Transverse colon (tissue), 4 donors: ENCODE measurements at regions of chr11 and their contacts with region 1.

Region 1: GRCh38 chr11:117107701-117108590 is 9.7 kb upstream of the SIK3 start:
- DNase-seq: no peak
- H3K4me3 ChIP-seq: no peak overlapping the region
- H3K27ac ChIP-seq: no peak overlapping the region
- H3K4me1 ChIP-seq: peaks cover 0 to 4% (median 1%) of the 10 kb centered on the region in 4 donors
- H3K27me3 ChIP-seq: no peaks in the 10 kb centered on the region
- CTCF ChIP-seq: no peak
- EP300 ChIP-seq: no peak
- POLR2A ChIP-seq: no peak

Region 2: GRCh38 chr11:116787786-116788486 is 320.0 kb before region 1 on chr11 and contains the start of gene ZPR1:
- in situ Hi-C with region 1: loop called (anchors 10 to 25 kb)
- intact Hi-C with region 1: no loop called
- DNase-seq: peak; percentile 91
- H3K4me3 ChIP-seq: peak within 1 kb of the TSS; percentile 81 to 100 (median 92)
- H3K27ac ChIP-seq: peak within 1 kb of the TSS; percentile 80 to 92 (median 91)
- H3K4me1 ChIP-seq: peaks cover 6 to 27% (median 23%) of the 10 kb centered on the region in 4 donors
- H3K27me3 ChIP-seq: no peaks in the 10 kb centered on the region
- CTCF ChIP-seq: peak in 2 of 5 experiments; percentile 48 to 59
- EP300 ChIP-seq: no peak
- POLR2A ChIP-seq: peak; percentile 81
- total RNA-seq, gene ZPR1: 13.1 to 20.9 (median 16.4) TPM

Region 3: GRCh38 chr11:116879800-116880625 is 227.9 kb before region 1 on chr11:
- in situ Hi-C with region 1: loop called (anchors 5 to 10 kb)
- intact Hi-C with region 1: loop called (anchors 5 kb)
- DNase-seq: no peak
- H3K4me3 ChIP-seq: no peak overlapping the region
- H3K27ac ChIP-seq: no peak overlapping the region
- H3K4me1 ChIP-seq: peaks cover 0 to 5% (median 0%) of the 10 kb centered on the region in 4 donors
- H3K27me3 ChIP-seq: no peaks in the 10 kb centered on the region
- CTCF ChIP-seq: peak; percentile 56 to 61 (median 60)
- EP300 ChIP-seq: no peak
- POLR2A ChIP-seq: no peak

Region 4: DNA sequence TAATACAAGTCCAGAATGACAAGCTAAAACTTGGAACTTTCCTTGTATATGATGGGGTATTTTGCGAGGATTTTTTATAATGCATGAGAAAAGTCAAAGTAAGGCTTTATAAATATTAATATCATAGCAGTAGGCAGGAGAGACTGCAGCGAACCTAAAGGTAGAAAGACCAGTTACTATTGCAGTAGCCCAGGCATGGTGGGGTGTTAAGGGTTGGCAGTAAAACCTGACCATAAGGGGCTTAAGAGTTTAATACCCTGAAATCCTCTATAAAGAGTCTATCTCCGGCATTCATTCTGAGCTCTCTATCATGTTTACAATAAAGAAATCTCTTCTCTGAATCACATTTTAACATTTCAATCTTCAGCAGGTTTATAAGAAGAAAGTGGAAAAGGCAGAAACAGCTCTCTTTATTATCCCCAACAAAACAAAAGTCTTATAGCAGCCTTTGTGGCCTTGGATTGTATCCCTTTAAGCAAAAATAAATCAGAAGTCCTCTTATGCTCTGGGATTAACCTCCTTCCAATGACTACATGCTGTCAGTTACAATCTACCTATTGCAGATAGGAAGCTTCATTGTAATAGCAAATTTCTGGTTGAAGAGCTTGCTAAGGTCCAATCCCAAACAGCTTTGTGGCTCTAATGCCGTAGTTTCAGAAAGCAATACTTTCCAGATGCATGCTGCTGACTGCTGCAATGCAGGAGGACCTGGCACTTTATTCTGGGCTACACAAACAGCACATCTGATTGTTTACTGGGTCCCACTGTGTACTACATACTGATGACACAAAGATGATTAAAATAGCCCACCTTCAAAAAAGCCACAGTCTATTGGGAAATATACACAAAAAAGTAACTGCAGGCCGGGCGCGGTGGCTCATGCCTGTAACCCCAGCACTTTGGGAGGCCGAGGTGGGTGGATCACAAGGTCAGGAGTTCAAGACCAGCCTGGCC is 55.5 kb before region 1 on chr11:
- in situ Hi-C with region 1: no loop called
- intact Hi-C with region 1: no loop called
- DNase-seq: no peak
- H3K4me3 ChIP-seq: no peak overlapping the region
- H3K27ac ChIP-seq: no peak overlapping the region
- H3K4me1 ChIP-seq: peaks cover 0 to 36% (median 18%) of the 10 kb centered on the region in 4 donors
- H3K27me3 ChIP-seq: no peaks in the 10 kb centered on the region
- CTCF ChIP-seq: no peak
- EP300 ChIP-seq: no peak
- POLR2A ChIP-seq: no peak